ENCODE measurements at regions of chrX and their contacts with region 1.

Region 1: DNA sequence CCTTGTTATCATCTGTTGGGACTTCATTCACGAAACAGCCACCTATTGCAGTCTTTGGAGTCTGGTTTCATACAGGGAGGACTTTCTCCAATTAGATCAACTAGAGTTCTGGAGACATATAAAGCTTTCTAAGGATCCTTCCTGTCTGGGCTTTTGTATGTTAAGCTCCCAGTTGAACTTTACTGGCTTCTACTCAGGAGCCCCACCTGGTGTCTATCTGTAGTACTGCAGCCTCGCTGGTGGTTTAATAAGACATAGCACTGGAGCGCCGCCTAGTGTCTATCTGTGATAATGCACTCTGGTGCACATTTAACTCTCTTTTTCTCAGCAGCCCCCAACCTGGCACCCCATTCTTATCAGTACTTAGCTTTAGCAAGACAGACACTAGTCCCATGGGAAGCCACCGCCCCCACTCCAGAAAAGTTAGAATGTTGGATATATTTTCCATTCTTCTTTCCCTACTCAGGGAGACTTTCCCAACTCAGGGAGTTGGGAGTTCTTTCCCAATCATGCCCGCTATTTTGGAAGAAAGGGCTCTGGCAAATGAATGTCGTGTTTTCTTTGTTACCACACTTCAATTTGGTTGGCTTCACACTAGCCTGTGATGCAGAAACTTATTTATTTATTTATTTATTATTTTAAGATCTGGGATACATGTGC is 36.9 kb upstream of the SYTL4 start:
- DNase-seq: peak; percentile 79 to 95 (median 84)
- H3K4me3 ChIP-seq: no peak overlapping the region
- H3K27ac ChIP-seq: no peak overlapping the region
- H3K4me1 ChIP-seq: no peaks in the 10 kb centered on the region
- H3K27me3 ChIP-seq: peaks cover 8% of the 10 kb centered on the region
- CTCF ChIP-seq: peak; percentile 98 to 100 (median 98)
- POLR2A ChIP-seq: no peak

Region 2: DNA sequence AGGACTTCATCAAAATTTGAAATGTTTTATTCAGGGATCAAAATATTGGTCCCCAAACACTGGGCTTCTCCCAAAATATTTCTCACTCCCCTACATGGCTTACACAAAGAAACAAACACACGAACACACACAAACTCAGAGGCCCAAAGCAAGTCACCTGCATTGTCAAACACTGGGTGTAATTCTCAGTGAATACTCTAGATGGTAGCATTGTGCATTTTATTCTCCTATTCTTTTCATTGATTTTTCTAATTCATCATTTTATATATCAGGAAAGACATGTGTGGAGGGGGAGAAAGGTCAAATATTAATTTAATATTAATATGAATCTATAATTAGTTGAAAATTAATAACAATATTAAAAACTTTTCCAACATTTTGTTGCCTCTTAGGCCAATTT is 256.3 kb before region 1 on chrX:
- intact Hi-C with region 1: loop called in 1 of 2 experiments (anchors 10 kb)
- DNase-seq: no peak
- H3K4me3 ChIP-seq: no peak overlapping the region
- H3K27ac ChIP-seq: no peak overlapping the region
- H3K4me1 ChIP-seq: no peaks in the 10 kb centered on the region
- H3K27me3 ChIP-seq: peaks cover 15% of the 10 kb centered on the region
- CTCF ChIP-seq: peak; percentile 28 to 70 (median 57)
- POLR2A ChIP-seq: no peak

Region 3: DNA sequence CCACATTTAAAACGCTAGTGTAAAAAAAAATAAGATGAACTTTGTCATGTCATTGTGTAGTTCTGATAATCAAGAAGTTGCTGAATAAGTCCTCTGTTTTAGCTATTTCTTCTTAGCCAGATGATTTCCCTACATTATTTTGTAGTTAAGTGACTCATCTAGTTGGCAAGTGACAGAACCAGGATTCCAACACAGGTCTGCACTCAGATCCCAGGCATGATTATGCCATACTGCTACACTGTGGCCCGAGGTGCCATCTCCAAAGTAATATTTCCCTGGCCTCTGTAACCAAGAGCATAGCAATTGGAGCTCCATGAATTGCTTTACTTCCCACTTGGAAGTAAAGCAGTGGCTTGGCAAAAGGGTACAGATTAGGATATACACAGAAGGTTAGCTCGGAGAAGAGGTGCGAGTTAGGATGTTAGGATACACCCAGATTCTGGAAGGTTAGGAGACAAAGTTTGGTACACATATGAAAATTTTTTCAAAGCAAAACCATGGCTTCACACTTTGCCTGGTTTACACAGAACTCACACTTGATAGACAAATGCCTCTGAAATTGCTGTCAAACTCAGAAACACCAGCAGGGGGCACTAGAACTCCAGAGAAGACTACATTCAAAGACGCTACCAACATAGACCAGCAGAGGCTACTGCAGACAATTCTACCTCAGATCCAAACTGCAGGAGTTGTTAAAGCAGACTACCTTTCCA is 83.4 kb before region 1 on chrX:
- intact Hi-C with region 1: loop called (anchors 5 to 10 kb)
- DNase-seq: peak; percentile 64 to 87 (median 72)
- H3K4me3 ChIP-seq: no peak overlapping the region
- H3K27ac ChIP-seq: no peak overlapping the region
- H3K4me1 ChIP-seq: no peaks in the 10 kb centered on the region
- H3K27me3 ChIP-seq: peaks cover 3% of the 10 kb centered on the region
- CTCF ChIP-seq: peak; percentile 79 to 98 (median 92)
- POLR2A ChIP-seq: no peak